ENCODE measurements at regions of chr15 and their contacts with region 1.

Region 1: DNA sequence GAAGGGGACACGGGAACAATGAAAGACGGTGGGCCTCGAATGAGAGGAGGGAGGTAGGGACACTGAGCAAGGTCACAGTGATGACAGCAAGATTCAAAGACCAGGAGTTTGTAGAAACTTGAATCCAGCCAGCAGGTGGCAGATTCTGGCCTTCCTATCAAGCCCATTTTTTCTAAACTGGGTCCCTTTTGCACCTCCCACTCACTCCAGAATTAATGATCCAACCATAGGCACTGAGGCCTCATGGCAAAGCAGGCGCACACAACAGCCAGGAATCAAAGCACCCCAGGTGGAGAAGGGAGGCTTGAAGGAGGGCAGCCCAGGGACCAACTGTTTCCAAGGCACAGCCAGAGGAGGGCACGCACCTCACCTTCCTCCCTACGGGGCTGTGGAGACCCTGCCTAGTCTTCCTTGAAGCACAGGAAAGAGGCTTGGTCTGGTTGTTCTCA is 90.2 kb downstream of the ANP32A start:
- H3K4me3 ChIP-seq: no peak overlapping the region
- H3K27ac ChIP-seq: no peak overlapping the region
- H3K4me1 ChIP-seq: no peaks in the 10 kb centered on the region; the same call in 1 of the 2 replicates
- CTCF ChIP-seq: peak; percentile 74

Region 2: DNA sequence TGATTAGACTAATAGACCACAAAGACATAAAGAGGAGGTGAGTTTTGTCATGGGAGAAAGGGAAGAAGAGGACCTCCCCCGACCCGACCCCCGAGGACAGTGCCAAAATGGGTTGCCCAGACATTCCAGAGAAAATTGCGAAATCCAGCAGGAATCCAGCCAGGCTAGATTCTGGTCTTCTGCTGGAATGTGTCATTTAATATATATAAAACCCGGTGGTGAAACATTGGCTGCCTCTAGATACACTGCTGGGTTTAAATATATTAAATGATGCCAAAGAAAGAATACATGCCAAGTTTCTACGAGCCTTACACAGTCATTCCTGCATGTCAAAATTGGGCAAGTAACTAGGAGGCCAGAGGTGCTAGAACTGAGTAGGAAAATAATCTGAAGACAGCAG is 154.6 kb after region 1 on chr15:
- CTCF ChIA-PET with region 1: interaction called, 12 read pairs
- POLR2A ChIA-PET with region 1: no interaction called
- H3K4me3 ChIP-seq: no peak overlapping the region
- H3K27ac ChIP-seq: no peak overlapping the region
- H3K4me1 ChIP-seq: no peaks in the 10 kb centered on the region
- CTCF ChIP-seq: no peak

Measured in HEK293 (cell line).